Aorta (tissue), 5 donors: ENCODE measurements at regions of chr22 and their contacts with region 1.

Region 1: GRCh38 chr22:39123751-39124601 is 26.9 kb downstream of the APOBEC3H start:
- DNase-seq: no peak
- ATAC-seq: no peak
- H3K4me3 ChIP-seq: no peak overlapping the region
- H3K27ac ChIP-seq: no peak overlapping the region
- H3K4me1 ChIP-seq: no peaks in the 10 kb centered on the region
- H3K27me3 ChIP-seq: no peaks in the 10 kb centered on the region

Region 2: DNA sequence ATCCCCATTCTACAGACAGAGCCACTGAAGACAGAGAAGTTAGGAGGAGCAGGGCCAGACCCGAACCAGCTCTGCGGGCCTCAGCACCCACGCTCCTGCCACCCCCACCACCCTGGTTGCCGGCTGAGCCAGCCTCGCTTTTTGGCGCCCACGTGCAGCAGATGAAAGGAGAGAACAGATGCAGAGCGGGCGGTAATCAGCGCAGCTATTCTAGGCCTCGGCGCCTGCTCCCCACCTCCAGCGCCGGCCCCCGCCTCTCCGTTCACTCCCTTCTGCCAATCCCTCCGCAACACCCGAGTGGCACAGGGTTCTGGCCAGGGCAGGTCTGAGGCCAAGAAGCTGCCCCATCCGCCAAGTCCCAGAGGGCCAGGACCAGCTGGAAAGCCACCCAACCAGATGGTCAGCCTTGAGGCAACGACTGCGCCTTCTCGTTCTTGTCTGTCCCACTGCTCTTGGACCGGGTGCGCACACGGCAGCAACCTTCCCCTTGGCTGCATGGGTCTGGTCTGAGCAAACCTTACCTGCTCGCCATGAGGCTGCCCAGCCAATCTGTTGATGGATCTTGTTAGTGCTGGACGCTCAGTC is 346.8 kb before region 1 on chr22:
- intact Hi-C with region 1: loop called in 1 of 2 experiments (anchors 10 kb)
- DNase-seq: no peak
- ATAC-seq: no peak
- H3K4me3 ChIP-seq: no peak overlapping the region
- H3K27ac ChIP-seq: no peak overlapping the region
- H3K4me1 ChIP-seq: no peaks in the 10 kb centered on the region
- H3K27me3 ChIP-seq: no peaks in the 10 kb centered on the region

Region 3: DNA sequence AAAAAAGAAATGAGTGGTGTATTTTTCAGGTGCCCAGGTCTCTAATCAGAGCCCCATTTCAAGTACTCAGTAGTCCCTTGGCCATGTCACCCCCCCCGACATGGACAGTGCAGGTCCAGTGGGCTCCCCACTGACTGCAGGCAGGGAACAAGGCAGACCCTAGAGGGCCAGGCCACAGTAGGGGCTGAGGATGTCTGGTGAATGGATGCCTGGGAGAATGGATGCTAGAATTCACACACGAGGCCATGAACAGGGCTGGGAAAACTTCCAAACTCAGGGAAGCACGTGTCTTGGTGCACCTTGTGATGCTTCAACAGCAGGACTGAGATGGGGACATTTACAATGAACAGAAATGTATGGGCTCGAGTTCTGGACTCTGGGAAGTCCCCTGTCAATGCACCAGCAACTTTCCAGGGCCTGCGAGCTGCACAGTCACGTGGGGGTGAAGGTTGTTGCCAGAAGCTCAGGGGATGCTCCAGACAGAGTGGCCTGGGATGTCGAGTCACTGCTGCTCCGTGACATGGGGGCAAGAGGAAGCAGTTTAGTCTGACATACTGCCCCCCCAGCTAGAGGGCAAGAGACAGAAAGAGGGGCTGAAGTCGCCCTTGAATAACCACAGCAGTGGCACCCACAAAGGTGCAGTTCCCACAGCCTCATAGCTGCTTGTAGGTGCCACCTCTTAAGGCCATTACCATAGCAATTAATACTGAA is 43.8 kb before region 1 on chr22:
- intact Hi-C with region 1: no loop called
- DNase-seq: no peak
- ATAC-seq: no peak
- H3K4me3 ChIP-seq: no peak overlapping the region
- H3K27ac ChIP-seq: no peak overlapping the region
- H3K4me1 ChIP-seq: no peaks in the 10 kb centered on the region
- H3K27me3 ChIP-seq: no peaks in the 10 kb centered on the region

Region 4: DNA sequence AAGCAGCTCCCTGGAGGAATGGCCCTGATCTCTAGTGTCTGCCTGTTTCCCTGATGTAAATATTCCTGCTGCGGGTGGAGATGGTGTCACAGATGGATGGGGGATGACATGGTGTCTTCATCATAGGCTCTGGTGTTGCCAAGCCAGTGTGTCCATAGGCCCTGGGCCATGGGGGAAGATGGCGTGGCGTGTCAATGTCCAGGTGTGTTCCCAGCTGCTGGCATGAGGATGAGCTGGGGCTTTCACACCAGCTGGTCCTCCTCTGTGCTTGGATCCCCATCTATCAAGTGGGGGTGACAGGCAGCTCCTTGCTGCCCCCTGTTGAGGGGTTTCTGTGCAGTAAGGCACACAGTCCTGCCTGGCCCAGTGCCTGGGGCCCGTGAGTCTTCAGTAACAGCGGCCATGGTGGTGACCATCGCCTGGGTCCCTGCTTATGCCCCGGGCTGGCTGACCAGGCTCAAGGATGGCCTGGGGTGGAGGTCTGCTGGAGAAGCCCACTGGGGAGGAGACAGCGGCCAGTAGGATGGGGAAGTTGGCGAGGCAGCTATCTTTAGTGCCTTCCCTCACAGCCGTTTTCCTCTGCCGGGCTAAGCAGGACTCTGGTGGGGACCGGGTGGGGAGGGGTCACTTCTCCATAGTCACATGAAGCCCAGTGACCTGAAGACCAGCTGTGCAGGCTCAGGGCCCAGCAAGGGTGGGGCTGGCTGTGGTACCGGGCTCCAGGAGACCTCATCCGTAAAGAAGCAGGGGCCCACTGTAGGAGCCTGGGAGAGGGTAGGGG is 182.8 kb after region 1 on chr22:
- intact Hi-C with region 1: no loop called
- DNase-seq: peak in 1 of 2 donors; percentile 71
- ATAC-seq: no peak
- H3K4me3 ChIP-seq: no peak overlapping the region
- H3K27ac ChIP-seq: no peak overlapping the region
- H3K4me1 ChIP-seq: no peaks in the 10 kb centered on the region
- H3K27me3 ChIP-seq: no peaks in the 10 kb centered on the region